ENCODE measurements at regions of chr6 and their contacts with region 1.

Region 1: GRCh38 chr6:144482142-144482541 is 197.0 kb downstream of the UTRN start:
- DNase-seq: peak; percentile 27 to 67 (median 61)
- ATAC-seq: peak; percentile 77
- H3K4me3 ChIP-seq: no peak overlapping the region
- H3K4me3 Mint-ChIP-seq: no peak overlapping the region
- H3K27ac ChIP-seq: no peak overlapping the region
- H3K27ac Mint-ChIP-seq: peak overlapping the region in 6 of 9 donors; percentile 12 to 88 (median 38)
- H3K4me1 ChIP-seq: no peaks in the 10 kb centered on the region
- H3K4me1 Mint-ChIP-seq: peaks cover 0 to 20% (median 4%) of the 10 kb centered on the region in 7 donors
- H3K27me3 ChIP-seq: no peaks in the 10 kb centered on the region
- H3K27me3 Mint-ChIP-seq: no peaks in the 10 kb centered on the region

Region 2: GRCh38 chr6:144262470-144263369 is 219.4 kb before region 1 on chr6:
- CTCF ChIA-PET with region 1: interaction called, 15 read pairs
- POLR2A ChIA-PET with region 1: no interaction called
- intact Hi-C with region 1: loop called (anchors 1 kb)
- DNase-seq: peak in 7 of 9 donors; percentile 8 to 41 (median 26)
- ATAC-seq: no peak
- H3K4me3 ChIP-seq: no peak overlapping the region
- H3K4me3 Mint-ChIP-seq: no peak overlapping the region
- H3K27ac ChIP-seq: no peak overlapping the region
- H3K27ac Mint-ChIP-seq: peak overlapping the region in 1 of 9 donors; percentile 10
- H3K4me1 ChIP-seq: no peaks in the 10 kb centered on the region
- H3K4me1 Mint-ChIP-seq: peaks cover 0 to 2% (median 0%) of the 10 kb centered on the region in 7 donors
- H3K27me3 ChIP-seq: no peaks in the 10 kb centered on the region
- H3K27me3 Mint-ChIP-seq: peaks cover 0 to 2% (median 0%) of the 10 kb centered on the region in 5 donors

Region 3: DNA sequence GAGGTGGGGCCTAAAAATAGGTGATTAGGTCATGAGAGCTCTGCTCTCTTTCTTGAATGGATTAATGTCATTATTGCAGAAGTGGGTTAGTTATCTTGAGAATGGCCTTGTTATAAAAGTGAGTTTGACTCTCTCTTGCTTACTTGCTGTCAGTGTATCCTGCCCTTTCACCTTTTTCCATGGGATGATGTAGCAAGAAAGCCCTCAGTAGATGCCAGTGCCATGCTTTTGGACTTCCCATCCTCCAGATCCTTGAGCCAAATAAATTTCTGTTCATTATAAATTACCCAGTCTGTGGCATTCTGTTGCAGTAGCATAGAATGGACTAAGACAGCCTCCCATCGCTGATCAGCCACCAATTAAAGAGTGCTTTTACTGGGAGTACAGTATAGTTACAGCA is 156.9 kb before region 1 on chr6:
- CTCF ChIA-PET with region 1: interaction called, 3 read pairs
- POLR2A ChIA-PET with region 1: no interaction called
- intact Hi-C with region 1: loop called in 1 of 2 experiments (anchors 1 kb)
- DNase-seq: no peak
- ATAC-seq: no peak
- H3K4me3 ChIP-seq: no peak overlapping the region
- H3K4me3 Mint-ChIP-seq: no peak overlapping the region
- H3K27ac ChIP-seq: no peak overlapping the region
- H3K27ac Mint-ChIP-seq: no peak overlapping the region
- H3K4me1 ChIP-seq: no peaks in the 10 kb centered on the region
- H3K4me1 Mint-ChIP-seq: peaks cover 2 to 27% (median 10%) of the 10 kb centered on the region in 7 donors
- H3K27me3 ChIP-seq: no peaks in the 10 kb centered on the region
- H3K27me3 Mint-ChIP-seq: peaks cover 0 to 12% (median 0%) of the 10 kb centered on the region in 5 donors

Measured in naive thymus-derived CD4-positive, alpha-beta T cell (primary cell).